ENCODE measurements at regions of chr9 and their contacts with region 1.

Region 1: DNA sequence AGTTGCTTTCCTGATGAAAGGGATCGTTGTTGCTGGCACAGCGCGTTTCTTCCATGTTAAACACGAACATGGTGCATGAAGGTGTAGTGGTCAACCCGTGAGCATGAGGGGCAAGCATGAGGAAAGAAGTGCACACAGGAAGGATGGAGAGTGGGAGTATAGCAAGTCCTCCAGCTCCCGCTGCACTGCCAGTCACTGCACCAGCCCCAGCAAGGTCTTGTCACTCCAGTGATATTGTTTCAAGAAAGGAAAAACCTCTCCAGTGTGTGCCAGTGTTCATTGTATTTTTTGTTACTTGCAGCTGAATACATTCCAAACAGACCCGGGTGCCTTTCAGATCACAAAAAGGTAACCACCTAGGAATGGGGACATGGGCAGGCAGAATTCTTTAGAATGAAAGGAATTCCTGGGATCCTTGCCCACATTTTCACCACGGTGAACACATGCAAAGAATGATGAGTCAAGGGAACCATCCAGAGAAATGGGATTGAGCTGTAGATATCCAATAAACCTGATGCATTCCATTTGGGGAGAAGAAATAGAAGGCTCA is 186.3 kb downstream of the AOPEP start:
- DNase-seq: peak; percentile 47
- H3K4me3 Mint-ChIP-seq: peak overlapping the region; percentile 47
- H3K27ac Mint-ChIP-seq: peak overlapping the region; percentile 74
- H3K4me1 Mint-ChIP-seq: peaks cover 74% of the 10 kb centered on the region
- H3K27me3 Mint-ChIP-seq: no peaks in the 10 kb centered on the region
- CTCF ChIP-seq: no peak

Region 2: DNA sequence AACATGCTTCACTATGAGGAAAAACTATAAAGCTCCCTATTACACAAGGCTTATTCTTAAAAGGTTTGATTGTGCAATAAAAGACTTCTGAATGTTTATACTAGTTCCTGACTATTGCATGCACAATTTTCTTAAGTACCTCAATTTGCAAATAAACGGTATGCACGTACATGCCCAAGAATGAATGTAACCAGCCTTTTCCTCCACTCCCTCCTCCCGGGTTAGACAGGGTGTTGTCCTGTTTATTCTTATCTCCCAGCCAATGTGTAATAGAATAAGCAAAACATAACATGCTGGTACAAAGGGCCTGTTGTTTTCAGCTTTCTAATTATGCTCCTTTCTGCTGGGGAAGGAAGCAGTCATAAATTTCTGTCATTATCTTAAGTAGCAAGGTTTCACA is 107.2 kb before region 1 on chr9:
- CTCF ChIA-PET with region 1: interaction called, 6 read pairs
- intact Hi-C with region 1: loop called (anchors 2 kb)
- DNase-seq: peak; percentile 75
- H3K4me3 Mint-ChIP-seq: peak overlapping the region; percentile 39
- H3K27ac Mint-ChIP-seq: peak overlapping the region; percentile 99
- H3K4me1 Mint-ChIP-seq: peaks cover 57% of the 10 kb centered on the region
- H3K27me3 Mint-ChIP-seq: no peaks in the 10 kb centered on the region
- CTCF ChIP-seq: no peak

Region 3: GRCh38 chr9:94853887-94854286 is 58.9 kb before region 1 on chr9:
- CTCF ChIA-PET with region 1: no interaction called
- intact Hi-C with region 1: loop called (anchors 5 kb)
- DNase-seq: no peak
- H3K4me3 Mint-ChIP-seq: peak overlapping the region; percentile 58
- H3K27ac Mint-ChIP-seq: peak overlapping the region; percentile 100
- H3K4me1 Mint-ChIP-seq: peaks cover 28% of the 10 kb centered on the region
- H3K27me3 Mint-ChIP-seq: no peaks in the 10 kb centered on the region
- CTCF ChIP-seq: no peak

Region 4: GRCh38 chr9:94867281-94867841 is 45.4 kb before region 1 on chr9:
- CTCF ChIA-PET with region 1: interaction called, 4 read pairs
- intact Hi-C with region 1: loop called (anchors 2 kb)
- DNase-seq: peak; percentile 70
- H3K4me3 Mint-ChIP-seq: peak overlapping the region; percentile 36
- H3K27ac Mint-ChIP-seq: peak overlapping the region; percentile 93
- H3K4me1 Mint-ChIP-seq: peaks cover 32% of the 10 kb centered on the region
- H3K27me3 Mint-ChIP-seq: no peaks in the 10 kb centered on the region
- CTCF ChIP-seq: no peak

Region 5: DNA sequence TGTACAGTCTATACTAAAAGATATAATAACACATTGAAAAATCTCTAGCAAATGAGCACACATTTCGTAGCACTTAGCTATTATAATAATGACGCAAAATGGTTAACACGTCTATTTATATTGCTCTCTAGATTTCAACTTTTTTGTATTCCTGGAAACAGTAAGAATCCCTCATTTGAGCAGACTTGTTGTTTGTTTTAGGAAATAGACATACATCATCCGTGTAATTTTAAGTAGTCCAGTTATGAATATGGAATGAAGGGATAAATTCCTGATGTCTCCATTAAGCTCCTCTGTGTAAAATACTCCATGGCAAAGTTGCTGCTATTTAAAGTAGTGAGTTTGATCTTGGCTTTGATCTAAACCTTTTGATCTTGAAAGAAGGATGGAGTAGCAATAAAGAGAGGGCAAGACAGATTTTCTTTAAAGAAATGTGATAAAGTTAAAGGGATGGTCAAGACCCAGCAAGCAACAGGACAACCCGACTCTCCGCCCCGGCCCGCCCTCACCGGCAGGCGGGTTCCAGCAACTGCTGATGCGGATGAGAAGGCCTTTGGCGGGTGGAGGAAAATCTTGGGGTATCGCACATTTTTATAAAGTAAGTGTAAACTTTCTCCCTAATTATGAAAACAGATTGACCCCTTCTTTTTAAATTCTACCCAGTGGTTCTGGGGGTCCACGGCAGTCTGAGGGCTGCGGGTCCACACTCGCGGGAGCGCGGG is 91.1 kb after region 1 on chr9:
- CTCF ChIA-PET with region 1: no interaction called
- intact Hi-C with region 1: loop called (anchors 2 kb)
- DNase-seq: peak; percentile 58
- H3K4me3 Mint-ChIP-seq: peak overlapping the region; percentile 81
- H3K27ac Mint-ChIP-seq: peak overlapping the region; percentile 36
- H3K4me1 Mint-ChIP-seq: peaks cover 11% of the 10 kb centered on the region
- H3K27me3 Mint-ChIP-seq: no peaks in the 10 kb centered on the region
- CTCF ChIP-seq: no peak

Measured in Calu3 (cell line).